MCF 10A (cell line): ENCODE measurements at regions of chr2 and their contacts with region 1.

Region 1: DNA sequence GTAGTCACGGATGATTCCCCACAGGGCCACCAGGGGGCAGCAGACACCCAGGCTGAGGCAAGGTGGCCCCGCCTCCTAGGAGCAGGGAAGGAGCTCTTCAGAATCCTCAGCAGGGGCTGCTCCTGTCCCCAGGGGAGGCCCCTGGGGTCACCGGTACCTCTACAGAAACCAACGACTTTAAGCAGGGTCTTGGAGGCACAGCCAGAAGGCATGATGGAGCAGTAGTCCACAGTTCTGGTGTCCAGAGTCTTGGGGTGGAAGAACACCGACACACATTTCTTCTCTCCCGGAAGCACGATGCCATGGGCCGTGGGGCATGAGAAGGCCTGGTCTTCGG is 11.5 kb downstream of the CFAP65 start:
- DNase-seq: peak; percentile 80
- H3K4me3 Mint-ChIP-seq: no peak overlapping the region
- H3K27ac Mint-ChIP-seq: no peak overlapping the region
- H3K4me1 Mint-ChIP-seq: no peaks in the 10 kb centered on the region
- H3K27me3 Mint-ChIP-seq: peaks cover 32% of the 10 kb centered on the region
- CTCF ChIP-seq: peak; percentile 95

Region 2: DNA sequence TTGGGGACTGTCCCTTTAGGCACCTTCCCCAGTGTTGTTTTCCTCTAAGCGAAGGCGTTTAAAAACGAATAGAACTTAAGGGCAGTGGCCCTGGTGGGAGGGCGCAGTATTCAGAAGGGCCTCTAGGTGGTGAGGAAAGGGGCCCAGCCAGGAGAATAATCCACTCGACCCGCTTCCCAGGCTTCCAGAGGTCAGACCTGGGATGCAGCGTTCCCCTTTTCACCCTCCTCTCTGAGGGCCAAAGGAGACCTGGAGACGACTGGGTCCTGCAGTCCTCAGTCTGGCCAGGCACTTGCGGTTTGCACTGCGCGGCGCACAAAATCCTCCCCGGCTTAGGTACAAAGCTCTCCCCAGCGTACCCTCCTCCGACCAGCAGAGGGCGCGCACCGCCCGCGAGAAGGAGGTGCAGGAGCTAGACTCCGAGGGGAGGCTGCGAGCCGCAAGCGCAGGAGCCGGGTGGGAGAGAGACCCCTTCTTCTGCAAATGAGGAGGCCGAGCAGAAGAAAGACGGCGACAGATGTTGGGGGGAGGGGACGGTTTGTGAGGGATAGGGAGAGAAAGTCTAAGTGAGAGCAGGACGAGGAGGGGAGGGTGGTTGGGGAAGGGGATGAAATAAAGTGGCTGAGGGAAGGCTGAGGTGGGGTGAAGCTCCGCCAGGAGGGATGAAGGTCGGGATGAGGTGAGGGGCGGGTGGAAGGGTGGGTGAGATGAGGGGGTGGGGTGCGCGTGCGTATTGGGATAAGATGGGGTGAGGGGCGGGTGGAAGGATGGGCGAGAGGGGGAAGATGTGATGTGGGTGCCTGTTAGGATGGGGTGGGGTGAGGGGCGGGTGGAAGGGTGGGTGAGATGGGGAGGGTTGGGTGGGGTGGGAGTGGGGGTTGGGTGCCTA is 49.7 kb before region 1 on chr2:
- CTCF ChIA-PET with region 1: interaction called, 14 read pairs
- POLR2A ChIA-PET with region 1: no interaction called
- intact Hi-C with region 1: no loop called
- DNase-seq: peak; percentile 78
- H3K4me3 Mint-ChIP-seq: peak overlapping the region; percentile 56
- H3K27ac Mint-ChIP-seq: no peak overlapping the region
- H3K4me1 Mint-ChIP-seq: peaks cover 15% of the 10 kb centered on the region
- H3K27me3 Mint-ChIP-seq: peaks cover 90% of the 10 kb centered on the region
- CTCF ChIP-seq: peak; percentile 89

Region 3: GRCh38 chr2:219002395-219003266 is 27.2 kb before region 1 on chr2:
- CTCF ChIA-PET with region 1: interaction called, 18 read pairs
- POLR2A ChIA-PET with region 1: no interaction called
- intact Hi-C with region 1: no loop called
- DNase-seq: peak; percentile 33
- H3K4me3 Mint-ChIP-seq: peak overlapping the region; percentile 16
- H3K27ac Mint-ChIP-seq: no peak overlapping the region
- H3K4me1 Mint-ChIP-seq: peaks cover 15% of the 10 kb centered on the region
- H3K27me3 Mint-ChIP-seq: peaks cover 36% of the 10 kb centered on the region
- CTCF ChIP-seq: peak; percentile 53

Region 4: DNA sequence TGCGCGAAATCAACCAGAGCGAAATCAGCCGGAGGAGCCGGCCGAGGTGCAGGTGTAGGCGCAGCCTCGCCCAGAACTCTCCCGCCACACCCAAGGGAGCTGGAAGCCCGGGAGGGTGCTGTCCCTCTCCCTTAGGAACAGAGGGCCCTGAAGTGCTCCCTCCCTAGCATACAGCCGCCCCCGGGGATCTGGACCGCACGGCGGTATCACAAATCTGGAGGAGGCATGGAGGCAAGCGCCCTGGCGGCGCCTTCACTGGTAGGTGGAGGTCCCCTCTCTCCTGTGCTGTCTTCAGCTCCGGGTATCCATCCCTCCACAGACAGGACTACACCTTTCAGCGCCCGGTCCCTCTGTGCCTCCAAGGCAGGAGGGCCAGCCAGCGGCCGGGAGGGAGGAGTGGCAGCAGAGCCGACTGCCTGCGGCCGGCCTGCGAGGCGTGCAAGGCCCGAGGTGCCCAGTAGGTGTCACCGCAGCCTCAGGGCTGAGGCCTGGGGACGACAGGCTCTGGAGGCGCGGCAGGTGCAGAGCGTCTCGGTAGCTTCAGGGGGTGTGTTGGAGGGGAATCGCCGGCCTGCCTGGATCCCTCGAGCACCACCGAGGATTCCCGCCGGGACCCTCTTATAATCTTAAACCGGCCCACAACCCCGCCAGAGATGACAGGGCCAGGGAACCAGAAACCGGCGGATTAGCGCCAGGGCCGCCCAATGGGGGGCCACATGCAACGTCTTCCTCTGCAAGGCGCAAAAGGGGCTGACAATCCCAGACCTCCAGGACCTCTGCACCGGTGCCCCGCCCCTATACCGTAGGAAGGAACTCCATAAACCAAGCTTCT is 28.1 kb after region 1 on chr2:
- CTCF ChIA-PET with region 1: interaction called, 22 read pairs
- POLR2A ChIA-PET with region 1: no interaction called
- intact Hi-C with region 1: no loop called
- DNase-seq: peak; percentile 51
- H3K4me3 Mint-ChIP-seq: no peak overlapping the region
- H3K27ac Mint-ChIP-seq: no peak overlapping the region
- H3K4me1 Mint-ChIP-seq: no peaks in the 10 kb centered on the region
- H3K27me3 Mint-ChIP-seq: peaks cover 63% of the 10 kb centered on the region
- CTCF ChIP-seq: peak; percentile 95

Region 5: DNA sequence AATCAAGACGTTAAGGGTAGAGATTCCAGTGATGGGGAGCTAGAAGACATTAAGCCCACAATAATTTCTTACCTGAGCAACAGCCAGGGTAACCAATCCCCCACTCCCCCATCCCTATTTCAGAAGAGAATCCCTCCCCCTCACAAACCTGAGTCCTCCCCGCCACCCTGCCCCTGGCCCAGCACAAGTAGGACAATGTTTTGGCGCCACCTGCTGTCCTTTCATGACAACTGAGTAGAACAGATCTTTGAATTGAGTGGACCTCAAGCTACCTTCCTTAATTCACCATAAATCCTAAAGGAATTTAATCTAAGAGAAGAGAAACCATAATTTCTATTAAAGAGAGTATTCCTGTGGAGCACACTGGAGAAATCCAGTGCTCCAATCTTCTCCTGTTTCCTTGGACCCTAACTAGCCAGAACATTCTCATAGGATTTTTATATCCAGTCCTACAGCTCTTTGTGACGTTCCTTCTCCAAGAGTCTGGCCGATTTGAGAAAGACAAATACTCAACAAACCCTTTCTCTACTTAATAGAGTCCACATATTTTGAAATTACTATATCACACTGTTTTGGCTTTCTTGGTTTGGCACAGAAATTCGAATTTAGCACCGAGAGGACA is 89.7 kb after region 1 on chr2:
- CTCF ChIA-PET with region 1: interaction called, 112 read pairs
- POLR2A ChIA-PET with region 1: interaction called, 4 read pairs
- intact Hi-C with region 1: loop called (anchors 1 kb)
- DNase-seq: peak; percentile 75
- H3K4me3 Mint-ChIP-seq: no peak overlapping the region
- H3K27ac Mint-ChIP-seq: no peak overlapping the region
- H3K4me1 Mint-ChIP-seq: peaks cover 15% of the 10 kb centered on the region
- H3K27me3 Mint-ChIP-seq: no peaks in the 10 kb centered on the region
- CTCF ChIP-seq: peak; percentile 74

Region 6: GRCh38 chr2:219155054-219155644 is 125.4 kb after region 1 on chr2:
- CTCF ChIA-PET with region 1: interaction called, 178 read pairs
- POLR2A ChIA-PET with region 1: interaction called, 8 read pairs
- intact Hi-C with region 1: loop called (anchors 1 kb)
- DNase-seq: peak; percentile 89
- H3K4me3 Mint-ChIP-seq: no peak overlapping the region
- H3K27ac Mint-ChIP-seq: no peak overlapping the region
- H3K4me1 Mint-ChIP-seq: peaks cover 7% of the 10 kb centered on the region
- H3K27me3 Mint-ChIP-seq: no peaks in the 10 kb centered on the region
- CTCF ChIP-seq: peak; percentile 43